RWPE1 (cell line): ENCODE measurements at regions of chr14 and their contacts with region 1.

Region 1: GRCh38 chr14:24146978-24147760 is at the start of gene RNF31:
- DNase-seq: peak; percentile 95
- H3K27ac ChIP-seq: peak within 1 kb of the TSS; percentile 97
- CTCF ChIP-seq: no peak

Region 2: DNA sequence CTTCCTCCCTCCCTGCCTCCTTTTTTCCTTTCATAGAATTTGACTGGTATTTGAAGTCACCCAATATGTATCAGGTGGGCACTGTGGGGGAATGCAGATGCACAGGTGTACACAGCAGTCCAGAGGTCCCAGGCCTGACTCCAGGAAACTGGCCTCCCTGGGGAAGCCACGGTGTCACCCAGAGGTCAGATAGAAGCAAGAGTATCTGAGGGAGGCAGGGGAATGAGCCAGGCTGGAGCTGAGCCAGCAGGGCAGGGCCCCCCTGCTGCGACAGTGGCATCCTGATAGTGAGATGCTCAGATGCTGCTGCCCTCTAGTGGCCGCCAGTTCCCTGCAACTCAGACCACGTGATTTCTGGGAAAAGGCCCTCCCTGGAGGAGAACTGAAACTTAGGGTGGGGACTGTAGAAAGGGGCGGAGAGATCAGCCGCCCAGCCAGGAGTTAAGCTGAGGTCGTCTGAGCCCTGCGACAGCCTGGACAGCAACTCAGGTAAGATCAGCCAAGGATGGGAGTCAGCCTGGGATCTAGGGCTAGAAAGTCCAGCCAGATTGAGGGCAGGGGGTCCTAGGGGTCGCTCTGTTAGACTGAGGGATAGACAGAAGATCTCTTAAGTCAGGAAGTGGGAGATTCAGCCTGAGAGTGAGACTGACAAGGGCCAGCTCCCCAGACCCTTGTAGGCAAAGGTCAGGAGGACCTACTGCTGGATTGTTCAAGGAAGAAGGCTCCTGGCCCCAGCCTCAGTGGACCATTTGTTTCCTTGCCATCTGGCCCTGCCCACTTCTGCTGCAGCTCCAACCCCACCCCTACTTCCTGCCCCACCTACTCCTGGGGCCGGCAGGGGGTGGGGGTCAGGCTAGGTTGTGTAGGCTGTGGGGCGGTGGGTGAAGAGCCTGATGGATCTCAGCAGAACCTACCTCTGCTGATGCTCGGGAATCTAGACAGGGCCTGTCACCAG is 14.0 kb after region 1 on chr14 and contains the start of gene IRF9:
- CTCF ChIA-PET with region 1: interaction called, 10 read pairs
- POLR2A ChIA-PET with region 1: interaction called, 4 read pairs
- DNase-seq: peak; percentile 94
- H3K27ac ChIP-seq: peak within 1 kb of the TSS; percentile 90
- CTCF ChIP-seq: peak; percentile 95

Region 3: GRCh38 chr14:24965934-24966578 is 818.9 kb after region 1 on chr14:
- CTCF ChIA-PET with region 1: no interaction called
- POLR2A ChIA-PET with region 1: no interaction called
- DNase-seq: no peak
- H3K27ac ChIP-seq: no peak overlapping the region
- CTCF ChIP-seq: no peak